ENCODE measurements at regions of chr10 and their contacts with region 1.

Region 1: DNA sequence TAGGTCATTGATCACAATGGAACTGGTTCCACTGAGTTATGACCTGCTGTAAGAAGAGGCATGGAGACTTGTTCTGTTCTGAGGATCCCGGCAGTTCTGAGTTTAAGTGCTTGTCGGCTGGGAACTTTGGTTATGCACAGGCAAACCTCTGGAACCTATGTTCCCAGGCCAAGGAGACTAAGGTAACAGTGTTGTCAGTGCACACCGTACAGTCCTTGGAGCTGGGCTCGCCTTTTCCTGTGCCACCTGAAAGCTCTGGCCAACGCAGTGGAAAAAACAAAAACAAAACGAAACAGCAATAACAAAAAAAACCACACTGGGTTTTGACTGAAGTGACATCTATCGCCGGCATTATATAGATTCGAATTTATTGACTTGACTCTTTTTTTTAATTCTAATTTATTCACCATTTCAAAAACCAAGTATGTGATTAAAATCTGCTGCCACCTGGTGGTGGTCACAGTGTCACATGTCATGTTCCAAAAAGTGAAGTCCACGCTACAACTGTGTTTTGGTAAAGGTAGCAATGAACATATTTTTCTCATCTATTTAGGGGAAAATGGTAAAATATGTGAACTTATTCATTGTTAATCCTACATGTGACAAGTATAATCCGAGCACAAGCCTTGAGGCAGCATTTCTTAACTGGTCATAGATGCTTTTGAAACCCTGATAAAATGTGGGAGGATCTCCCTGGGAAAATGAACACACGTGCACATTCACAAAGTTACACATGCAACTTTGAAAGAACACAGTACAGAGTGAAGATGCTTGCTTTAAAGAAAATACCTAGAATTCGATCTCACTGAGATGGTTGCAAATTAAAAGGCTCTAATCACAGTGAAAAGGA is 113.8 kb upstream of the PPP2R2D start:
- DNase-seq: no peak
- H3K4me3 ChIP-seq: no peak overlapping the region
- H3K27ac ChIP-seq: no peak overlapping the region
- H3K4me1 ChIP-seq: no peaks in the 10 kb centered on the region
- H3K27me3 ChIP-seq: no peaks in the 10 kb centered on the region
- CTCF ChIP-seq: peak in 3 of 4 experiments; percentile 36 to 71 (median 47)
- EP300 ChIP-seq: no peak
- POLR2A ChIP-seq: no peak

Region 2: DNA sequence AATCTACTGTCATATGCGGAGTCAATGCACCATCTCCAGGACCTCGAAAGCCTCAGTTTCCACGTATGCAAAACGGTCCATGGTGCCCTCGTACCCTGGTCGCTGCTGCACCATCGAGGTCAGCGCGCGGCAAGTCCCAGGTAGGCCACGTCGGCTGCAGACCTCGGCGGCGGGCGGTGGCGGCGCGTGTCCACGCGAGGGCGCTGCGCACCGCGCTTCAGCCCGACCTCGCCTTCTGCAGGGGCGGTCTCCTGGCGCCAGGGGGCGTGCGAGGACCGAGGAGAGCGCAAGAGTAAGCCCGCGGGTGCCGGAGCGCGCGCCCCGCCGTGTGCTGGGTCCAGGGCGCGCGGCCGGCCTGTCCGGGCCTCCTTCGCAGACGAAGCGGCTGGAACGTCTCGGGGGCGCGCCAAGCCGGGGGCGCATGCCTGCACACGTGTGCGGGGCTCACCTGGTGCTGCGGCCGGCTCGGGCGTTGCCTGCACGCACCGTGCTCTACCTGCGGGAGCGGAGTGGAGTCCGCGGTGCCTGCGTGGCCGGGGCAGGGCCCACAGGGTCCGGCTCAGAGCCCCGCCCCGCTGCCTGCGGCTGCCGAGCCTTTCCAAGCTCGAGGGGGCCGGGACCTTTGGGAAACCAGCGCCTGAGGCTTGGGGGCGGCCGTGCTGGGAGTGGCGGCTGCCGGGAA is 1596.8 kb before region 1 on chr10:
- intact Hi-C with region 1: loop called (anchors 10 kb)
- DNase-seq: peak; percentile 91
- H3K4me3 ChIP-seq: peak overlapping the region; percentile 40 to 62 (median 50)
- H3K27ac ChIP-seq: peak overlapping the region in 1 of 4 donors; percentile 4
- H3K4me1 ChIP-seq: peaks cover 0 to 12% (median 7%) of the 10 kb centered on the region in 4 donors
- H3K27me3 ChIP-seq: peaks cover 0 to 9% (median 4%) of the 10 kb centered on the region in 3 donors
- CTCF ChIP-seq: peak; percentile 88 to 100 (median 92)
- EP300 ChIP-seq: no peak
- POLR2A ChIP-seq: no peak